Activated naive CD4-positive, alpha-beta T cell treated with anti-CD3 and anti-CD28 coated beads for 36 hours (primary cell): ENCODE measurements at regions of chr17 and their contacts with region 1.

Region 1: DNA sequence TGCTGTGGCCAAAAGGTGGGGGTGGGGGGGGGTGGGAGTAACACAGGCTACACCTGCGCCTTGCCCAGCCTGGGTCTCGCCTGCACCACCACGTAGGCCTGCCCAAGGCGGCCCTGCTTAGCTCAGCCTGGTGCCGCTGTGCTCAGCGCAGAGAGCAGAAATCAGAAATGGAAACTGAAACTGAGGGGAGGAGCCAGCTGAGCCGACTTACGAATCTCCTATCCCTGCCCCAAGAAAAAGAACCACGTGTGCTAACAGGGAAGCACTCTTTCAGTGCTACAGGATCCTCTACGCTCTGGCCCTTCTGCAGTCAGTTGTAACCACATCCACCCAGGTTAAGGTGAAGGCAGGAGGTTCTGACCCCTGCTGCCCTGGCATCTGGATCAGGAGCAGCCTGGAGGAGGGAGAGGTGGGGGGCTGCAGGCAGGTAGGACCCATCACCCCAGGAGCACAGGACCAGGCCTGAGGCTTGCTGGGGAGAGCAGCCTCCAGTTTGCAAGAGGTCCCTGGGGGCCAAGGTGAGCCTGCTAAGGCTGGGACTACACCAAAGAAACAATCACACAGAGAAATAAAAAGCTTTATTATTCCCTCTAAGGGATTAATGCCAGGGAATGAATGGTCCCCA is at the start of gene DHX58:
- DNase-seq: peak; percentile 90
- H3K4me3 Mint-ChIP-seq: peak within 1 kb of the TSS; percentile 81
- H3K27ac Mint-ChIP-seq: peak within 1 kb of the TSS; percentile 92
- H3K4me1 Mint-ChIP-seq: peaks cover 38% of the 10 kb centered on the region
- H3K27me3 Mint-ChIP-seq: no peaks in the 10 kb centered on the region
- total RNA-seq, gene DHX58: 44.4 to 46.3 TPM

Region 2: DNA sequence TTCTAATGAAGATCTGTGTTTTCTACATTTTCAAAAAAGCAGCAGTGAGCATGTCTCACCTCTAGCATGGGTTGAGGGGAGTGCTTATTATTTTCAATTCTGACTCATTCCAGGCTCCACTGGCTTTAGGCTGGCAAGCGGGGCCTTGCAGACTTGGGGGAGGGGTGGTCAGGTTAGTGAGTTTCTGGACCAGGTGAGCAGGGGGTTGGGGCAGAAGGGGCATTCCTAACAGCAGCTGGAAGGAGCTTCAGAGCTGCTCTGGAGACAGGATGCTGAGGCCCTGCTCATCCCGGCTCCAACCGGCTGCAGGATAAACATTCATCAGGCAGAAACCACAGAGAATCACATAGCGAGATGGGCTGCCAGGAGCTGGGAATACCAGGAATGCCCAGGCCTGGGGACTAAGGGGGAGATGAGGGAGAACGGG is 574.1 kb before region 1 on chr17:
- CTCF ChIA-PET with region 1: no interaction called
- intact Hi-C with region 1: no loop called
- DNase-seq: no peak
- H3K4me3 Mint-ChIP-seq: no peak overlapping the region
- H3K27ac Mint-ChIP-seq: no peak overlapping the region
- H3K4me1 Mint-ChIP-seq: no peaks in the 10 kb centered on the region
- H3K27me3 Mint-ChIP-seq: no peaks in the 10 kb centered on the region

Region 3: DNA sequence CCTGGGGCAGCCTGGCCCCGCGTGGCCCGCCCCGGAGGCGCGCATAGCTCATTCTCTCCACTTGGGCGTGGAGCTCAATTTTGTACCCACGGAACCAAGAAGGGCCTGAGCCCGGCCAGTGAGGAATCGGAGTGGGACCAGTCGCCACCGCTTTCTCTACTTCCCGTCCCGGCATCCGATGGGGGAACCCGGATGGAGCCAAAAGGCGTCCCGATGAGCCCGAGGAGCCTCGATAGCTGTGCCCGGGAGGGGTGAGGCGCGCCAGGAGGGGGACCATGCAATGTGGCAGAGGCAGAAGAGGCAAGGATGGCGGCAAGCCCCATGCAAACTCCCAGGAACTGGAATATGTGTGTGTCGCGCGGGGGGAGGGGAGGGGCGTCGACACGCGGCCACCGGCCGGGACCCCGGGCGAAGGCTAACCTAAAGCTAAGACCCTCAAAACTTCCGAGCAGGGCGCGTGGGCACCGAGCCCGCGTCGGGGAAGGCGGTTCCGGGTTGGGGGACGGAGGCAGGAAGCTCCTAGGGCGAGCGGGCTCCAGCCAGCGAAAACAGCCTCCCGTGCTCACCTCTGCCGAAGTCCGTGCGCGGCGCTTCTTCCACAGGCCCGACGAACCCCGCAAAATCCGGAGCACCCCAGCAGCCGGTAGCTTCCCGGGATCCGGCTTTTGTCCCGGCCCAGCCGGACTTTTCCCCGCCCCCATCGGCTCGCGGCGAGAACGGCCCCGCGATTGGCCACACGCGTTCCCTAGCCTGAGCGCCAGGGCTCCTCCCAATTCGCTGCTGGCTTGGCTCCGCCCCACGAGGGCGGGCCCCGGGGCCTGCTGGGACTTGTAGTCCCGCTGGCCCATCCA is 194.1 kb before region 1 on chr17 and contains the start of gene ACLY:
- CTCF ChIA-PET with region 1: no interaction called
- intact Hi-C with region 1: loop called (anchors 5 kb)
- DNase-seq: peak; percentile 96
- H3K4me3 Mint-ChIP-seq: peak within 1 kb of the TSS; percentile 94
- H3K27ac Mint-ChIP-seq: peak within 1 kb of the TSS; percentile 82
- H3K4me1 Mint-ChIP-seq: peaks cover 39% of the 10 kb centered on the region
- H3K27me3 Mint-ChIP-seq: no peaks in the 10 kb centered on the region
- total RNA-seq, gene ACLY: 153 to 161 TPM

Region 4: GRCh38 chr17:42025191-42025579 is 87.5 kb before region 1 on chr17:
- CTCF ChIA-PET with region 1: interaction called, 11 read pairs
- intact Hi-C with region 1: loop called (anchors 1 kb)
- DNase-seq: no peak
- H3K4me3 Mint-ChIP-seq: no peak overlapping the region
- H3K27ac Mint-ChIP-seq: peak overlapping the region; percentile 66
- H3K4me1 Mint-ChIP-seq: peaks cover 29% of the 10 kb centered on the region
- H3K27me3 Mint-ChIP-seq: no peaks in the 10 kb centered on the region

Region 5: DNA sequence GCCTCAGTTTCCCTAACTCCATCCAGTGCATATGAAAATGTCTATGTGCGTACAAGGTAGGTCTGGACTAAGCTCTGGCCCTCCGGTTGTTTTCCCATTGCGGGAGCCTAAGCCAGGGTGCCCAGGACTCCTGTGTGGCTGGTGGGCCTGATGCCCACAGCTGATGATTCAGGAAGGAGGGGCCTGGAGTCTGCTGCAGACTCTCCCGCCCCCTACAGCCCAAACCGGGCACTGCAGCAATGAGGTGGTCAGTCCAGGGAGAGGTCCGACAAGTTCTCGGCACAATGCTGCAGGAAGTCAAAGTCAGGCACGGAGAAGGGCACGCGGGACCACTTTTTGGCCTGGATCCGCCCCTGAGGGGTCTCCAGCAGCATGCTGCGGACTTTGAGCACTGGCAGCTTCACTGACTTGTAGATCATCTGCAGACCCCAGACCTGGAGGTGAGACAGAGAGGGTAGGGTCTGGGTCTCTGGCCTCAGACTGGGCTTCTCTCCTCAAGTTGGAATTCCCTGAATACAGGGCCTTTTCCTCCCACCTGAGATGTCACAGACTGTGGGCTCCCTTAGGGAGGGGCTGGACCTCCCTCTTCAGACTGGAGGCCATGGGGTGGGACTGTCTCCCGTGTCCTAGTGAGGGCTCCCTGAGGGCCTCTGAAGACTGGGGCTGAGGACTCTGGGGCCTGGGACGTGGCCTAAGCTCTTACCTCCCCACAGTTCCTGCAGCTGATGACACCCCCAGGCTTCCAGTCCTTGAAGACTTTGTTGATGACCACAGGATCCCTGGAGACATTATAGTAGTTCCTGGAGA is 10.9 kb before region 1 on chr17:
- CTCF ChIA-PET with region 1: interaction called, 12 read pairs
- intact Hi-C with region 1: no loop called
- DNase-seq: peak; percentile 83
- H3K4me3 Mint-ChIP-seq: no peak overlapping the region
- H3K27ac Mint-ChIP-seq: no peak overlapping the region
- H3K4me1 Mint-ChIP-seq: peaks cover 10% of the 10 kb centered on the region
- H3K27me3 Mint-ChIP-seq: peaks cover 12% of the 10 kb centered on the region

Region 6: DNA sequence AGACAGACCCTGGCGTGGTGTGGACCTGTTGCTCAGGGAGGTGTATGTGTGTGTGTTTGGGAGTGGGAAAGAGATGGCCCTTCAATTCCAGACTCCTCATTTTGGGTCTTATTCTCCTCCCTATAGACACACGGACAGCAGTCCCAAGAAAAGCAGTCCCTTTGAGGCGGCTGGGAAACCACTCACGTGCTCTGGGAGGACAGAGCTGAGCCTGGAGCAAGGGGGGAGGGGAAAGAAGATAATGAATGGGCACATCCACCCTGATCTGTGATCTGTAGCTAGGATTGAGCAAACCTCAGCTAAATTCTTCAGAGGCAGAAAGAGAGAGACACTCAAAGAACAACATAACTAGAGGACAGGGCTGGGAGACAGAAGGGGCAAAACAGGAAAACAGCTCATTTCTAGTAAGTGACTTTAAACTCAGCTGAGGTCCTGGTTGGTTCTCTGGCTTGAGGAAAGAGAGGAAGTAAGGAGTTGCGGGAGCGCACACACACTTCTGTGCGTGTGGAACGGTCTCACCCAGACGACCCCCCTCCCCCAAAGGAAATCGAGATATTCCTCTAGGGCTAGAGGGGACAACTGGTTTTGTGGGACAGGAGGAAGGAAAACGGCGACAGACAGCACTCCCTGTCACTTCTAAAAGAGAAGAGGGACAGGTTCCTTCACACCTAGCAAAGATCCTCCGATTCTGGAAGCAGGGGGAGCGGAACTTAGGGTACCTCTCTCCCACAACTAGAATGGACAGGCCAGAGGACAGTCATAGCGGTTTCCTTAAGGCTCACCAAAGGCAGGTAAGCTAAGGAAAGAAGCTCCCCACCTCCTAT is 41.5 kb after region 1 on chr17:
- CTCF ChIA-PET with region 1: no interaction called
- intact Hi-C with region 1: loop called (anchors 2 kb)
- DNase-seq: no peak
- H3K4me3 Mint-ChIP-seq: peak overlapping the region; percentile 83
- H3K27ac Mint-ChIP-seq: peak overlapping the region; percentile 87
- H3K4me1 Mint-ChIP-seq: peaks cover 39% of the 10 kb centered on the region
- H3K27me3 Mint-ChIP-seq: no peaks in the 10 kb centered on the region

Region 7: GRCh38 chr17:42221937-42222745 is 109.5 kb after region 1 on chr17:
- CTCF ChIA-PET with region 1: no interaction called
- intact Hi-C with region 1: no loop called
- DNase-seq: peak; percentile 73
- H3K4me3 Mint-ChIP-seq: no peak overlapping the region
- H3K27ac Mint-ChIP-seq: peak overlapping the region; percentile 6
- H3K4me1 Mint-ChIP-seq: peaks cover 2% of the 10 kb centered on the region
- H3K27me3 Mint-ChIP-seq: no peaks in the 10 kb centered on the region